Left cardiac atrium (tissue), 4 donors: ENCODE measurements at regions of chr1 and their contacts with region 1.

Region 1: GRCh38 chr1:40630488-40631381 is 34.7 kb downstream of the RIMS3 start:
- DNase-seq: no peak
- ATAC-seq: peak in 1 of 2 donors; percentile 55

Region 2: DNA sequence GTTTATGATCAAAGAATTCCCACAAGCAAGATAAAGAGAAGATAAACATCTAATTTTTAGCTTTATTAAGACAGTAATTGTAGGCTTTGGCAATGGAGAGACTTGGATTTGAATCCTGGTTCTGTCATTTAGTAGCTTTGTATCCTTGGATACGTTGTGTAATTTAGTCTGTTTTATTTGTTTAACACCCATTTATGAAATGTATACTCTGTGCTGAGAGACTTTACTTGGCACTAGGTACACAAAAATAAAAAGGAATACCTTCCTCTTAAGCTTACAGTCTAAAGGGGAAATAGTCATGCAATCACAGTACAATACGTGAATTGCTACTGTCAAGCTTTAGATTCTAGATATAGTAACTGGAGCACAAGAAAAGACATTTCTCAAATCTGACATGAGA is 348.9 kb before region 1 on chr1:
- intact Hi-C with region 1: no loop called
- DNase-seq: no peak
- ATAC-seq: no peak

Region 3: DNA sequence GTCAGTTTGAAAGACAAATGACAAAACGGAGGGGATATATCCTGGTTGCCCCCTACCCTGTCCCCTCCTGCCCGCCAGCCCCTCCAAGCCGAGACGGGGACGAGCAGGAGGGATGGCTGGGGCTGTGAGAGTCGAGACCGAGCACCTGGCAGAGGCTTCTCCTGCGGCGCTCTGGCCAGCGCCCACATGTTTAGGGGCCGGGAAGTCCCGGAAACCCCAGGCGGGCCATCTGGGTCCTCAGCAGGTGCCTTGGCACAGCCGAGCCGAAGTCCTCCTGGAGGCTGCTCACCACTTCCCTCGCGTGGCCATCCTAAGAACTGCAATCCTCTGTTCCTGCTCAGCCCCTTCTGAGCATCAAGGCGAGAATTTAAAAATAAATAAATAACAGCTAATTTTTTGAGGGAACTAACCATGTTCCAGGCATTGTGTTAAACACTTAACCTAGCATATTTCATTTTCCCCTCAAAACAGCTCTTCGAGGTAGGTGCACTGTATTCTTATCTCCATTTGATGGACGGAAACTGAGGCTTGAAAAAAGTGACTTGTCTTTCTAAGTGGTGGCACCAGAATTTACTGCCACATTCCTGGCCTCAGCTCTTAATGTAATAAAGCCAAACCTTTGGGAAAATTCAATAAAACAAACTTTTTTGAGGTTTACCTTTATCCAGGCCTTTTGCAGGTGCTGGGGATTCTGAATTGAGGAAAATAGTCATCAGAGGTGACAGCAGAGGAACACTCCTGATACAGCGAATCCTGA is 38.2 kb after region 1 on chr1:
- intact Hi-C with region 1: loop called in 1 of 2 experiments (anchors 5 kb)
- DNase-seq: peak; percentile 78
- ATAC-seq: peak; percentile 24 to 55

Region 4: GRCh38 chr1:40736085-40736531 is 105.4 kb after region 1 on chr1:
- intact Hi-C with region 1: no loop called
- DNase-seq: no peak
- ATAC-seq: peak in 1 of 2 donors; percentile 50